ENCODE measurements at regions of chr3 and their contacts with region 1.

Region 1: DNA sequence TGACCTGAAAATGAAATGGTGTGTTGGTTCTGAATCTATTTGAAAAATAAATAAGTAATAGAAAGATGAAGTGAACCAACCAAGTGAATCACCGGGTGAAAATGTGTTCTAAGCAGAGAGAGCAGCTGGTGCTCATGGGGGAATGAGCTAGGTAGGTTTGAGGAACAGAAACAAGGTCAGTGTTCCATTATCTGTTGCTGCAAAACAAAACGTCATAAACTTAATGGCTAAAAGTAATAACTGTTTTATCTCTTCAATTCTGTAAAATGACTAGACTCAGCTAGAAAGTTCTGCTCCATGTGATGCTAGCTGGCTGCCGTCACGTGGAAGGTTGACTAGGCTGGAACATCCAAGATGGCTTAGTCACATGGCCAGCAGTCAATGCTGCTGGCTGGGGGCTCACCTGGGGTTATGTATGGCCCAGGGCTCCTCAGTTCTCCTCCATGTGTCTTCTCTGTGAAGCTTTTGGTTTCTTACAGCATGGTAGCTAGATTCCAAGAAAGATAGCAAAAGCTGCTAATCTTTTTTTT is 13.3 kb upstream of the SH3BP5 start:
- DNase-seq: peak; percentile 14
- H3K4me3 Mint-ChIP-seq: no peak overlapping the region
- H3K27ac Mint-ChIP-seq: no peak overlapping the region
- H3K4me1 Mint-ChIP-seq: peaks cover 46% of the 10 kb centered on the region
- H3K27me3 Mint-ChIP-seq: peaks cover 13% of the 10 kb centered on the region

Region 2: GRCh38 chr3:15287565-15288330 is 57.9 kb before region 1 on chr3:
- CTCF ChIA-PET with region 1: no interaction called
- POLR2A ChIA-PET with region 1: no interaction called
- DNase-seq: no peak
- H3K4me3 Mint-ChIP-seq: no peak overlapping the region
- H3K27ac Mint-ChIP-seq: no peak overlapping the region
- H3K4me1 Mint-ChIP-seq: peaks cover 59% of the 10 kb centered on the region
- H3K27me3 Mint-ChIP-seq: no peaks in the 10 kb centered on the region

Region 3: DNA sequence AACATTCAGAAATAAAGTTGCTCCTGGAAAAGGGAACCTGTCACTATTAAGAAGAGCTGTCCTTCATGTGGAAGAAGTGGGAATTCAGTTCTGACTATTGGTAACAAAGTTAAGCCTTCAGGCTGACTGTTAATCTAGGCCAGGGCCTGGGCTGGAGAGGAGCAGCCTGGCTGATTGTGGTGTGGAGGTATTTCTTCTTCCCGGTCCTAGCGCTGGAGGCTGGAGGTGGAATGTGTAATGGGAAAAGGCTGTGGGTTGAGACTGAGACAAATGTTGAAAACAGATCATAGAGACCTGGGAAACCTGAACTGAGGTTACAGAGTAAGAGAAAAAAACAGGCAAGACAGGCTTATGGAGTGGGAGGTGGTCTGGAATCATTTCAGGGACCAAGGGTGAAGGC is 10.5 kb after region 1 on chr3:
- CTCF ChIA-PET with region 1: interaction called, 11 read pairs
- POLR2A ChIA-PET with region 1: no interaction called
- DNase-seq: no peak
- H3K4me3 Mint-ChIP-seq: no peak overlapping the region
- H3K27ac Mint-ChIP-seq: peak overlapping the region; percentile 85
- H3K4me1 Mint-ChIP-seq: peaks cover 52% of the 10 kb centered on the region
- H3K27me3 Mint-ChIP-seq: no peaks in the 10 kb centered on the region

Measured in activated CD4-positive, alpha-beta T cell treated with anti-CD3 and anti-CD28 coated beads, Interleukin-2, amount 10 ng/mL, durations not matched to agents 7 days and 5 days (primary cell).